ENCODE measurements at regions of chr5 and their contacts with region 1.

Region 1: GRCh38 chr5:149381987-149382340 is 2.9 kb upstream of the IL17B start:
- DNase-seq: peak; percentile 38 to 87 (median 70)

Region 2: GRCh38 chr5:149434162-149435014 is 52.4 kb after region 1 on chr5:
- intact Hi-C with region 1: loop called (anchors 5 kb)
- DNase-seq: peak in 41 of 42 donors; percentile 32 to 85 (median 64)